Activated naive CD8-positive, alpha-beta T cell treated with anti-CD3 and anti-CD28 coated beads, Interleukin-2, amount 10 ng/mL, durations not matched to agents 7 days and 5 days (primary cell): ENCODE measurements at regions of chr12 and their contacts with region 1.

Region 1: GRCh38 chr12:57469296-57470164 is 9.9 kb downstream of the GLI1 start:
- DNase-seq: no peak
- ATAC-seq: no peak
- H3K4me3 Mint-ChIP-seq: no peak overlapping the region
- H3K27ac Mint-ChIP-seq: peak overlapping the region; percentile 28
- H3K4me1 Mint-ChIP-seq: peaks cover 26% of the 10 kb centered on the region
- H3K27me3 Mint-ChIP-seq: no peaks in the 10 kb centered on the region

Region 2: DNA sequence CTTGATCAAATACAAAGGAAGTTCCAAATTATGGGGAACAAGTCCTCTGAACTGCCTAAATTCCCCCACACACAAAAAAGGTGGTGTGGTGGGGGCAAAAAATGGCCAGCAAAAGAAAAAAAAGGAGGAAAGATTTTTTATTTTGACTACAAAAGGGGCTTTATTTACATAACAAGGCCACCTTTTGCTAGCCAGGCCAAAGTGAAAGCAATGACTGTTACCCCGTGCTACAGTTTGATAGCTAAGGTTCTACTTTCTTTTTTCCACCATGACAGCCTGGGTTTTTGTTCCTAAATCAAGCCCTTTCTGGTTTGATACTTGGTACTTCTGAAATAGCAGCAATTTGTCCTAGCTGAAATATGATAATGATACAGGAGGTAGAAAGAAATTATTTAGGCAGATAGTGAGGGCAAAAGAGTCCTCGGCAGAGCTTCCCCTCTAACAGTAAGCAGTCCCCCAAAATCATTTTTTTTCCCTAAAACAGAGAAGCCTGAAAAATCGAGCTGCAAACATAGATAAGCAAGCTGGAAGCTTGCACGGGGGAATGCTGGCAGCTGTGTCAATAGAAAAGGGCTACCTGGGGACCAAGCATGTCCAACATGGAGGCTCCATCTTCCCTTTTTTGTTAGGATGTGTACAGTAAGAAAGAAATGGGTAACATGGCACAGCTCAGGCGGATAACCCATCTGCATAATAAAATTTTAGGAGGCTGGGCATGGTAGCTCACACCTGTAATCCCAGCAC is 172.3 kb after region 1 on chr12:
- POLR2A ChIA-PET with region 1: interaction called, 10 read pairs
- DNase-seq: no peak
- ATAC-seq: no peak
- H3K4me3 Mint-ChIP-seq: no peak overlapping the region
- H3K27ac Mint-ChIP-seq: no peak overlapping the region
- H3K4me1 Mint-ChIP-seq: no peaks in the 10 kb centered on the region
- H3K27me3 Mint-ChIP-seq: peaks cover 26% of the 10 kb centered on the region